PC-3 (cell line): ENCODE measurements at regions of chr3 and their contacts with region 1.

Region 1: DNA sequence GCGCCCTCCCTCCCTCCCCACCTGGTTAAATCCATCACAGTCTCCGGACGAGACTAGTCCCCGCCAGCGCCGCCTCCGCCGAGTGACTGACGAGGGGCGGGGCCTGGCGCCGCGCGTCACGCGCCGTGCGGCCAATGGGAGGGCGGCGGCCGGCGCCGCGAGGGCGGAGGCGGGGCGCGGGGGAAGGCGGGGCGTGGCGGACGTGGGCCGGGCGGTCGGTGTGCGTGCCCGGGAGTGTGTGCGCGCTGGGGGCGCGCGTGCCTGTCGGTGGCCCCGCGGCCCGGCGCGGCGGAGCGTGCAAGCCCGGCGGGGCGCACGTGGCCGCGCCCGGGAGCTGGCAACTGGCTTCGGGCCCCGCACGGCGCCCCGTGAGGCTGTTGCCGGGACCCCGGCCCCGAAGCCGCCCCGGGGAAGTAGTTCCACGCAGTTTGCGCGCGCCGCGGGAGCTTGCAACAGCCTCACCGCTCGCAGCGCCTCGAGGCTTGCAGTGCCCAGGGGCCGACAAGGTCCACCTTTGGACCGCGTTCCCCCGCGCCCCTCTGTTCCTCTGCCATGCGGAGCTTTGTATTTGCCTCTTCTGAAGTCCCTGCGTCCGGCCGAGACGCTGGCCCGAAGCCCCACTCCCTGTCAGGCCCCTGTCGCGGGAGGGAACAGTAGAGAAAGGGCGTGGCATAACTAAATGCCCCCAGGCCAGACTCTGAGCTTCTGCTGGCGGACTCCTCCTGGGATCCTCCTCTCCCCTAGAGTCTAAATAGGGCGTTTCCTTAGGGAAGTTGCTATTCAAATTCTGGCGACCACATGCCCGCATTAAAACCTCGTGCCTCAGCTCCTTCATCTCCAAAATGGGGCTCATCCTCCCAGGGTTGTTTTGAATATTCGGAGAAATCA is 400.9 kb downstream of the SHQ1 start:
- DNase-seq: peak; percentile 92
- ATAC-seq: peak; percentile 86
- H3K4me3 ChIP-seq: peak overlapping the region; percentile 49; the same call in 1 of the 2 replicates
- H3K27ac ChIP-seq: no peak overlapping the region
- H3K4me1 ChIP-seq: peaks cover 22% of the 10 kb centered on the region
- H3K27me3 ChIP-seq: no peaks in the 10 kb centered on the region
- CTCF ChIP-seq: no peak

Region 2: GRCh38 chr3:71955240-71956068 is 491.8 kb before region 1 on chr3:
- CTCF ChIA-PET with region 1: no interaction called
- POLR2A ChIA-PET with region 1: no interaction called
- intact Hi-C with region 1: loop called (anchors 10 kb)
- DNase-seq: peak; percentile 85
- ATAC-seq: peak; percentile 62
- H3K4me3 ChIP-seq: no peak overlapping the region
- H3K27ac ChIP-seq: no peak overlapping the region
- H3K4me1 ChIP-seq: peaks cover 4% of the 10 kb centered on the region; the same call in 1 of the 2 replicates
- H3K27me3 ChIP-seq: peaks cover 44% of the 10 kb centered on the region
- CTCF ChIP-seq: peak; percentile 92

Region 3: GRCh38 chr3:72193771-72194463 is 253.4 kb before region 1 on chr3:
- CTCF ChIA-PET with region 1: no interaction called
- POLR2A ChIA-PET with region 1: no interaction called
- intact Hi-C with region 1: loop called (anchors 10 kb)
- DNase-seq: no peak
- ATAC-seq: no peak
- H3K4me3 ChIP-seq: no peak overlapping the region
- H3K27ac ChIP-seq: no peak overlapping the region
- H3K4me1 ChIP-seq: peaks cover 16% of the 10 kb centered on the region
- H3K27me3 ChIP-seq: no peaks in the 10 kb centered on the region
- CTCF ChIP-seq: no peak

Region 4: GRCh38 chr3:72482589-72483321 is 35.5 kb after region 1 on chr3:
- CTCF ChIA-PET with region 1: no interaction called
- POLR2A ChIA-PET with region 1: interaction called, 6 read pairs
- intact Hi-C with region 1: loop called (anchors 2 kb)
- DNase-seq: peak; percentile 80
- ATAC-seq: peak; percentile 21
- H3K4me3 ChIP-seq: peak overlapping the region; percentile 71
- H3K27ac ChIP-seq: peak overlapping the region; percentile 37
- H3K4me1 ChIP-seq: peaks cover 23% of the 10 kb centered on the region
- H3K27me3 ChIP-seq: no peaks in the 10 kb centered on the region
- CTCF ChIP-seq: no peak

Region 5: DNA sequence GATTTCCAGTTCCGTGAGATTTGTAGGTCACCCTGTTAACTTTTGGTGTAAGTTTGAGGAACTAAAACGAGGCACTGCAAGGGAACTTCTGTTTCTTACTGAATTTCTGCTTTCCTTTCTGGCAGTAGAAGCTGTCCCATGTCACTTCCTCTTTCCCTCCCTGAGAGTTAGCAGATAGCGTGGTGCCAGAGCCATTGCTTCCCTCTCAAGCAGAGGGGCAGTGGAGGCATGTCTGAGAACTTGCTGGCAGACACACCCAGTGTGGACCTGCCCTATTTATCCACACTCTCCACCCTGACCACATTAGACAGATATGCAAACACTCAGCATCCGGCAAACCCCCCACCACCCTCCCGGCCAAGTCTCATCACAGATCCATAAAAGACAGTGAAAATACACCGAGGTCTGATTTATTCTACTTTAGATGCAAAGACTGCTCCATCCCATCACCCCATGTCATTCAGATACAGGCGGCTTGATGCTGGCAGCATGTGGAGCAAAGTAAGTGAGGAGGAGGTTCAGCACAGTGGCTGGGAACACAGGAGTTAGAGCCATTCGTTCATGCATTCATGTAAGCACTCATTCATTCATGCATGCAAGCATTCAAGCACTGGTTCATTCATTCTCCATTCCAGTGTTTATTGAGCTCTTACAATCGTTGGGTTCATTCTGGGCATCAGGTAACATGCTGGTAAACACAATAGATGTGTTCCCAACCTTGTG is 76.3 kb after region 1 on chr3:
- CTCF ChIA-PET with region 1: no interaction called
- POLR2A ChIA-PET with region 1: no interaction called
- intact Hi-C with region 1: loop called (anchors 5 kb)
- DNase-seq: peak; percentile 66
- ATAC-seq: peak; percentile 84
- H3K4me3 ChIP-seq: peak overlapping the region; percentile 11; the same call in 1 of the 2 replicates
- H3K27ac ChIP-seq: peak overlapping the region; percentile 57
- H3K4me1 ChIP-seq: peaks cover 44% of the 10 kb centered on the region
- H3K27me3 ChIP-seq: no peaks in the 10 kb centered on the region
- CTCF ChIP-seq: no peak

Region 6: GRCh38 chr3:72652395-72652794 is 205.1 kb after region 1 on chr3:
- CTCF ChIA-PET with region 1: no interaction called
- POLR2A ChIA-PET with region 1: no interaction called
- intact Hi-C with region 1: no loop called
- DNase-seq: no peak
- ATAC-seq: no peak
- H3K4me3 ChIP-seq: no peak overlapping the region
- H3K27ac ChIP-seq: no peak overlapping the region
- H3K4me1 ChIP-seq: peaks cover 10% of the 10 kb centered on the region
- H3K27me3 ChIP-seq: 0 out of 2 replicates have a peak, but pooled peaks cover 5% of the 10 kb centered on the region
- CTCF ChIP-seq: no peak

Region 7: GRCh38 chr3:72665701-72666443 is 218.6 kb after region 1 on chr3:
- CTCF ChIA-PET with region 1: no interaction called
- POLR2A ChIA-PET with region 1: no interaction called
- intact Hi-C with region 1: loop called (anchors 5 kb)
- DNase-seq: peak; percentile 73
- ATAC-seq: peak; percentile 60
- H3K4me3 ChIP-seq: no peak overlapping the region
- H3K27ac ChIP-seq: no peak overlapping the region
- H3K4me1 ChIP-seq: peaks cover 9% of the 10 kb centered on the region
- H3K27me3 ChIP-seq: no peaks in the 10 kb centered on the region
- CTCF ChIP-seq: peak; percentile 85

Region 8: DNA sequence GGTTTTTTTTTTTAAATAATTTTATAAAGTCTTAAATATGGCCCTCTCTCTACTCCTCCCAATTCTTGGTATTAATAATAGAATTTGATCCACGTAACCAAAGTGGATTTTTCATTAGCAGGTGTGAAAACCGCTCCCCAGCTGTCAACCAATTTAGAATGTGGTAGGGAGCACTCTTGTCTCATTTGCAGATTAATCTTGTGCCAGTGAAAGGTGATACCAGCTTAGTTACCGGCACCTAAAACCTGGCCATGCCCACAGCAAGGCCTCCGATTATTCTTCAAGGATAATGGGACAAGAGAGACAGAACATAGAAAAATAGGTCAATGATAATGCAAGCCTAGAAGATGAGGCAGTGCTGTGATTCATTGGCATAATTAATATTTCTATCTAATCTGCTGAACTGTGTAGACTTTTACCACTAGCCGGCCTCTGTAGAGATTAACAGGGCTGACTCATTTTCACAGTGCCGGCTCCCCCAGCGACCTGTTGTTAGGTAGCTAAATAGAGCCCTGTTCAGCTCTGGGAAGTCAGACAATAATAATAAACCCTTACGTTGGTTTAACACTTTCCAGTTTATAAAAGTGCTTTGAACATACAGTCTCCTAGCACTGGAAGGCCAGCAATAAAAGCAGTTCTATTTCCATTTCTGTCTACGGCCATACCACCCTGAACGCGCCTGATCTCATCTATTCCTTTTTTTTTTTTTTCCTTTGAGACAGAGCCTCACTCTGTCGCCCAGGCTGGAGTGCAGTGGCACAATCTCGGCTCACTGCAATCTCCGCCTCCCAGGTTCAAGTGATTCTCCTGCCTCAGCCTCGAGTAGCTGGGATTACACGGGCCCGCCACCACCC is 298.1 kb after region 1 on chr3:
- CTCF ChIA-PET with region 1: no interaction called
- POLR2A ChIA-PET with region 1: no interaction called
- intact Hi-C with region 1: loop called (anchors 10 kb)
- DNase-seq: peak; percentile 72
- ATAC-seq: peak; percentile 82
- H3K4me3 ChIP-seq: no peak overlapping the region
- H3K27ac ChIP-seq: peak overlapping the region; percentile 77
- H3K4me1 ChIP-seq: peaks cover 26% of the 10 kb centered on the region
- H3K27me3 ChIP-seq: no peaks in the 10 kb centered on the region
- CTCF ChIP-seq: no peak